Cardiac septum (tissue), 1 donor: ENCODE measurements at regions of chr12 and their contacts with region 1.

Region 1: GRCh38 chr12:121536899-121537813 is 43.7 kb downstream of the KDM2B start:
- DNase-seq: peak; percentile 97

Region 2: DNA sequence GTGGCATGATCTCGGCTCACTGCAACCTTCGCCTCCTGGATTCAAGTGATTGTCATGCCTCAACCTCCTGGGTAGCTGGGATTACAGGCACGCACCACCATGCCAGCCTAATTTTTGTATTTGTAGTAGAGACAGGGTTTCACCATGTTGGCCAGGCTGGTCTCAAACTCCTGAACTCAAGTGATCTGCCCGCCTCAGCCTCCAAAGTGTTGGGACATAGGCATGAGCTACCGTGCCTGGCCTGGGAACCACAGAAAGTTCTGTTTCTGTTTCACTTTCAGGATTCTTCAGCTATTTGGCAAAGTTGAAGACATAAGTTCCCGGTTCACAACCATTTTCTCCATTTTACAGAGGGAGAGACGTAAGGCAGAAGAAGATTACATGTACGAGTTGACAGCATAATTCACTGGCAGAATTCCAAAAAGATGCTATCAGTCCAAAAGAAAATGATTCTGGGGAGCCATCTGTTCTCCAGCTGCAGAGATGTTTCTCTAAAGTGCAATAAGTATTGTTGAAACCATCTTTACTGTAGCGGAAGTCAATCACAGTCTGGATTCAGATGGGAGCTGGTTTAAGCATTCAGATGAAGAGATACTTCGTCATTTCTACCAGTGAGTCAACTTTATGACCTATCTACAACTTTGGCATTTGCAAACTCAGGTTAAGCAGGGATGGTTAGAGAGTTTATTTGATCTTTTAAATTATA is 145.4 kb before region 1 on chr12:
- intact Hi-C with region 1: no loop called
- DNase-seq: no peak

Region 3: GRCh38 chr12:121499929-121500793 is 37.0 kb before region 1 on chr12:
- intact Hi-C with region 1: loop called (anchors 5 kb)
- DNase-seq: peak; percentile 90

Region 4: GRCh38 chr12:121579981-121580868 is 43.1 kb after region 1 on chr12:
- intact Hi-C with region 1: loop called (anchors 5 kb)
- DNase-seq: peak; percentile 87

Region 5: GRCh38 chr12:121626087-121626852 is 89.1 kb after region 1 on chr12 and contains the start of gene ORAI1:
- intact Hi-C with region 1: loop called (anchors 2 kb)
- DNase-seq: peak; percentile 99
- total RNA-seq, gene ORAI1: 8.0 TPM

Region 6: DNA sequence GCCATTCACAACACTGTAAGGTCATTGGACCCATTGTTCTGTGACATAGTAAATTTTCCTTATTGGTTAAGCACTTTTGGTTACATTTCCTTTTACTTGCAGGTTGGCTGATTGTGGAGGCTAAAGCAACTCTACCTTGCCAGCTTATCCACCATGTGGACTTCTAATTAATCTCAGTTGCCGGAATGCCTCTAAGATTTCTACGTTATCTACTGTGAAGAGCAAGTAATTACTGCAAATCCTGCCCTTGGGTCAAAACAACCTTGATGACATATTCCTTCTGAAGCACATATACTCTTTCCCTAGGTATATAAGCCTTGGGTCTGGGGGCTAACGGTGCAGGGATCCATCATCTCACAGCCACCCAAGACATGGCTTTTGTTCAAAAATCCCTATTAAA is 151.8 kb after region 1 on chr12:
- intact Hi-C with region 1: loop called (anchors 5 kb)
- DNase-seq: no peak